ENCODE measurements at regions of chr4 and their contacts with region 1.

Region 1: GRCh38 chr4:147731580-147732517 is at the start of gene ARHGAP10:
- DNase-seq: peak; percentile 62
- ATAC-seq: peak; percentile 83
- H3K4me3 Mint-ChIP-seq: peak within 1 kb of the TSS; percentile 86
- H3K27ac Mint-ChIP-seq: peak within 1 kb of the TSS; percentile 81
- H3K4me1 Mint-ChIP-seq: peaks cover 31% of the 10 kb centered on the region
- H3K27me3 Mint-ChIP-seq: peaks cover 44% of the 10 kb centered on the region
- total RNA-seq, gene ARHGAP10: 6.3 to 7.1 TPM

Region 2: DNA sequence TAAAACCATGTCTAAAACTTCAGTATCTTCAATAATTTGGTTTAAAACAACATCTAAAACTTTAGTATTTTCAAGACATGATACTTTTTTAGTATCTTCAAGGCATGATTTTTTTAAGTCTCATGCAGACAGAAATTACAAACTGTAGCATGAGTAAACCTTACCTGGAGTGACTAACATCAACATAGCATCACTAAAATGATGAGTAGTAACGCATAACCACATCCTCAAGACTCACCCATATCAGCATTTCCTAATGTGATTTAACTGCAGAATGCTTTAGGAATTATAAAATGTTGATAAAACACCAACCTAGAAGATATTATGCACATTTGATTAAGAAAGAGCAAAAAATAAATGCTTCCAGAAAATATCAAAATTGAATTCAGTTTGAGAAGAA is 270.7 kb before region 1 on chr4:
- CTCF ChIA-PET with region 1: no interaction called
- POLR2A ChIA-PET with region 1: no interaction called
- DNase-seq: no peak
- ATAC-seq: no peak
- H3K4me3 Mint-ChIP-seq: no peak overlapping the region
- H3K27ac Mint-ChIP-seq: no peak overlapping the region
- H3K4me1 Mint-ChIP-seq: no peaks in the 10 kb centered on the region
- H3K27me3 Mint-ChIP-seq: no peaks in the 10 kb centered on the region

Region 3: DNA sequence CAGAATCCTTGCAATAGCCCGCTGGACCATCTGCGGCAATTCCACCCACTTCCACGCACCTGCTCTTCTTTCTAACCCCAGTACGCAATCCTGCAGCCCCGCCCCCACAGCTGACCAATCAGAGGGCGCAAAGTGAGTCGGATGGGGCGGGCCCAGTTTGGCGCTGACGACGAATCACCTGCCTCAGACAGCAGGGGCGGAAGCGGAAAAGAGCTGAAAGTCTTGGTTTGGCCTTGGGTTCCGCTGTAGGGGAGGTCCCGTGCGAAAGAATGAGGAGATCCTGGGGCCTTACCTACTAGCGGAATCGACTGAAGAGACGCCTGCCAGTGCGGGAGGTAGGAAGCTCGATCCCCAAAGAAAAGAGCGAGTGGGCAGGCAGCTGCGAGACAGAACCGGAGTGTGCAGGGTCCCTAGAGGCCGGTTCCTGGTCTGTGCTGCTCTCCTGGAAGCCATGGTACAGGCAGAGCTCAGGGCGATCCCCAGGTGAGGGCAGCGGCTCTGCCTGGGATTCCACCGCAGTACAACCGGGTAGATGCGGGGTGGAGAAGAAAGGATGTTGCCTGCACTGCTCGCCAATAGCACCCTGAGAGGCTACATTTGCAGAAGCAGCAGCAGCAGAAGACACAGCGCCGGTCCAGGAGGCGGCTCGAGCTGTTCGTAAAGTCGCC is 114.5 kb before region 1 on chr4 and contains the start of gene TMEM184C:
- CTCF ChIA-PET with region 1: interaction called, 9 read pairs
- POLR2A ChIA-PET with region 1: interaction called, 16 read pairs
- DNase-seq: peak; percentile 99
- ATAC-seq: peak; percentile 99
- H3K4me3 Mint-ChIP-seq: peak within 1 kb of the TSS; percentile 86
- H3K27ac Mint-ChIP-seq: peak within 1 kb of the TSS; percentile 94
- H3K4me1 Mint-ChIP-seq: peaks cover 22% of the 10 kb centered on the region
- H3K27me3 Mint-ChIP-seq: peaks cover 14% of the 10 kb centered on the region
- total RNA-seq, gene TMEM184C: 18.5 to 20.6 TPM

Region 4: GRCh38 chr4:147683717-147684700 is 47.8 kb before region 1 on chr4 and contains the start of gene PRMT9:
- CTCF ChIA-PET with region 1: interaction called, 5 read pairs
- POLR2A ChIA-PET with region 1: interaction called, 10 read pairs
- DNase-seq: peak; percentile 92
- ATAC-seq: peak; percentile 98
- H3K4me3 Mint-ChIP-seq: peak within 1 kb of the TSS; percentile 87
- H3K27ac Mint-ChIP-seq: peak within 1 kb of the TSS; percentile 95
- H3K4me1 Mint-ChIP-seq: peaks cover 47% of the 10 kb centered on the region
- H3K27me3 Mint-ChIP-seq: peaks cover 2% of the 10 kb centered on the region
- total RNA-seq, gene PRMT9: 12.5 to 13.4 TPM

Region 5: GRCh38 chr4:147707865-147708672 is 23.8 kb before region 1 on chr4:
- CTCF ChIA-PET with region 1: interaction called, 14 read pairs
- POLR2A ChIA-PET with region 1: no interaction called
- DNase-seq: peak; percentile 62
- ATAC-seq: peak; percentile 71
- H3K4me3 Mint-ChIP-seq: no peak overlapping the region
- H3K27ac Mint-ChIP-seq: no peak overlapping the region
- H3K4me1 Mint-ChIP-seq: peaks cover 12% of the 10 kb centered on the region
- H3K27me3 Mint-ChIP-seq: peaks cover 13% of the 10 kb centered on the region

Region 6: DNA sequence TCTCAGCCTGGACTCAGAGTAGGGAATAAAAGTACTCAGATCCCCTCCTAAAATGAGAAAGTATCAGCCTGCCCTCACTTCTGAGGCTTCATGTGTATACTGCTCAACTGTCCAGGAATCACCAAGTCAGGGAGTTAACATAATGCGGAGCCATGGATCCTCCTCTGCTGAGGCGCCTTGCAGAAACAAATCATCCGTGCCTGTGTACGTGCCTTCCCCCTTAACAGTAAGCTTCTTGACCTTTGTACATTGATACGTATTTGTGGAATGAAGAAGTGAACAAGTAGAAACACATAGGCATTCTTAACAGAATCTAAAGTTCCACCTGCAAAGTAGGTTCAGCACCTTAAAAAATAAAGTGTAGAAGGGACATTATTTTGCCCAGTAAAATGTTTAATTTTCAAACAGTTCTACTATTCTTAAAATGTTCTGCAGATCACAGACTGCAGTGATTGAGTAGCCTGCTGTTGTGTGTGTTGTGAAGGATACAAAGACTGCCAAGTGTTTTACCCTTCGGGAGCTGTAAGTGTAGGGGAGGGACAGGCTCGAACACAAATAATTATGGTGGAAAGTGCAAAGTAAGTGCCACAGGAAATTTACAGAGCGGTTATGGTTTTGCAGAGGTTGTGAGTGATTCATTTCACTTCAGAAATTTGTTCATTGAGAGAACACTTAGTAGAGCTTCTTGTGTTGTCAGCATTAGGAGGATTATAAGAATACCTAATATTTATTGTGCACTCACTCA is 61.9 kb after region 1 on chr4:
- CTCF ChIA-PET with region 1: interaction called, 6 read pairs
- POLR2A ChIA-PET with region 1: interaction called, 12 read pairs
- DNase-seq: peak; percentile 32
- ATAC-seq: peak; percentile 46
- H3K4me3 Mint-ChIP-seq: no peak overlapping the region
- H3K27ac Mint-ChIP-seq: peak overlapping the region; percentile 2
- H3K4me1 Mint-ChIP-seq: peaks cover 44% of the 10 kb centered on the region
- H3K27me3 Mint-ChIP-seq: peaks cover 5% of the 10 kb centered on the region